ENCODE measurements at regions of chr1 and their contacts with region 1.

Region 1: GRCh38 chr1:116724765-116725375 is 29.4 kb upstream of the CD2 start:
- DNase-seq: peak; percentile 42
- H3K4me3 ChIP-seq: no peak overlapping the region; a peak in 1 of 4 replicates
- H3K27ac ChIP-seq: no peak overlapping the region
- H3K4me1 ChIP-seq: peaks cover 0 to 6% of the 10 kb centered on the region in 2 experiments; a peak in 2 of 4 replicates
- H3K27me3 ChIP-seq: no peaks in the 10 kb centered on the region; the same call in 1 of the 2 replicates
- CTCF ChIP-seq: peak; percentile 90
- EP300 ChIP-seq: no peak
- RAD21 ChIP-seq: peak; percentile 64

Region 2: DNA sequence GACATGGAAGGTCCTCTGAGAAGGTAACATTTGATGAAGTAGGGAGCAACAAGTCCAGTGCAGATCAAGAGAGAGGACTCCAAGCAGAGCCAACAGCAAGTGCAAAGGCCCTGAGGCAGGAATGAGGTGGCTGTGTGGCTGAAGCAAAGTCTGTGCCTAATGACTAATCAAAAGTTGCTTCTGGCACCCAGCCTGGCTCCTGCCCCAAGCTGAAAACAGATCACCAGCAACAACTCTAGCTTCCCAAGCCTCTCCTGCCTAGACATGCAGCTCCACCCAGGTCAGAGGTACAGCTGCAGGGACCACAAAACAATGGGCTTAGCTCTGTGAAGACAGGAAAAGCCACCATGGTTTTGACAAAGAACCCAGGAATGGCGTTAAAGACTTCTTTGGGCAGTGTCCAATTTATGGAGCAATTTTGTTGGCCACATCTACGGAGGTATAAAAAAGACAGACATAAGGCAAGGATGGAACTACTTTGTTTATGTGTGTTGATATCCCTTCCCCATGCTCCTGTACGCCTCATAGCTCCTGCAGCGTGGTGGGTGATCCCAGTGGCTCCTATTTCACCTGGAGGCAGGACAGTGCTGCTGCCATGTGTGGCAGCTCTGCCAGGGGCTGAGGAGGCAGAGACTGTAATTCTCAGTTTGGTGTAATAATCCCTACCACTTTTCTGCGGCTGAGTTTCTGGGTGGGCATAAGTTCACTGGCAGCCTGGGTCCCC is 30.9 kb before region 1 on chr1:
- CTCF ChIA-PET with region 1: interaction called, 29 read pairs
- POLR2A ChIA-PET with region 1: interaction called, 3 read pairs
- DNase-seq: no peak
- H3K4me3 ChIP-seq: no peak overlapping the region
- H3K27ac ChIP-seq: peak overlapping the region in 1 of 2 experiments; percentile 50; a peak in 1 of 4 replicates
- H3K4me1 ChIP-seq: peaks cover 5 to 73% of the 10 kb centered on the region in 2 experiments; a peak in 3 of 4 replicates
- H3K27me3 ChIP-seq: no peaks in the 10 kb centered on the region
- CTCF ChIP-seq: no peak
- EP300 ChIP-seq: no peak
- RAD21 ChIP-seq: no peak

Region 3: DNA sequence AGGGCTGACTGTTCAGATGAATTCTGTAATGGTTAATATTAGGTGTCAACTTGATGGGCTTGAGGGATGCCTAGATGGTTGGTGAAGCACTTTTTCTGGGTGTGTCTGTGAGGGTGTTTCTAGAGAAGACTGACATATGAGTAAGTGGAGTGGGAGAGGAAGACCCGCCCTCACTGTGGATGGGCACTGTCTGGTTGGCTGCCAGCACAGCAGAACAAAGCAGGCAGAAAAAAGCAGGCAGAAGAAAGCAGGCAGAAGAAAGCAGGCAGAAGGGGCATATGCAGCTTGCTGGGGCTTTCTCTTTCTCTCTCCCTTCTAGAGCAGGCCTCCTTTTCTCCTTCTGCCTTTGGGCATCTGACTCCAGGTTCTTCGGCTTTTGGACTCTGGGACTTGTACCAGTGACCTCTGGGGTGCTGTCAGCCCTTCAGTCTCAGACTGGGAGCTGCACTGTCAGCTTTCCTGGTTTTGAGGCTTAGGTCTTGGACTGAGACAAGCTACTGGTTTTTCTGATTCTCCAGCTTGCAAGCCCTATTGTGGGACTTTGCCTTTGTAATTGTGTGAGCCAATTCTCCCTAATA is 13.5 kb before region 1 on chr1:
- CTCF ChIA-PET with region 1: interaction called, 55 read pairs
- POLR2A ChIA-PET with region 1: interaction called, 3 read pairs
- DNase-seq: peak; percentile 48
- H3K4me3 ChIP-seq: no peak overlapping the region
- H3K27ac ChIP-seq: peak overlapping the region in 1 of 2 experiments; percentile 75; a peak in 1 of 4 replicates
- H3K4me1 ChIP-seq: peaks cover 0 to 38% of the 10 kb centered on the region in 2 experiments; a peak in 3 of 4 replicates
- H3K27me3 ChIP-seq: no peaks in the 10 kb centered on the region
- CTCF ChIP-seq: no peak
- EP300 ChIP-seq: no peak
- RAD21 ChIP-seq: no peak